Cardiac septum (tissue), 1 donor: ENCODE measurements at regions of chr10 and their contacts with region 1.

Region 1: DNA sequence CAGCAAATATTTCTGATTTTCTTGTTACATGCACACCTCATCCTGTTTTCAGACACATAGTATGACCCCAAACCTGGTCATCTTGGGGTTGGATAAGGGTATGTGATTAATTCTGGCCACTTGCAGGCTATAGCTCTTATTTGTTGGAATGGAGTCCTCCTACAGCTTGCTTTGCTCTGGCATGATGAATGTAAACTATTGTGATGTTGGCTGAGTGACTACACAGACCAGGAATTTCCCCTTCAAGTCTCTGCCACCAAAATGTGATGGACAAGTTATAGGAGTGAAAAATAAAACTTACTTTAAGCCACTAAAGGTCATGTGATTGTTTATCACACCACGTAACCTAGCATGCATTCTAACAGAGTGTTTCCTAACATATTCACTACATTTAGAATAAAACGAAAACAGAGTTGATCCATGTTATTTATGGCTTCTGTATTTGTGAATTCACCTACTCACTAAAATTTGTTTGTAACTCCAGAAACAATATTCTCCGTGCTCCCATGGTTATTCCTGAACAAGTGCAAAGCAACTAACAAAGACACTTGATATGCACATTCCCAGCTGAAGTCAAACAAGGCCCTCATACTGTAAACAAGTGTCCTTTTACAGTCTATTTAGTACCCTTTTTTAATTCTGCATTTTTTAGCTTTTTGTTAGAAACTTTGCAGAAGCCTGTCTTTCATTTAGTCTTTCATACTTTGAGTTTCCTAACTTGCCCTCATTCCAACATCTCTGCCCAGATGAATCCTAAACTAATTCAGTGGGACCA is 599.2 kb upstream of the PCDH15 start:
- DNase-seq: no peak

Region 2: DNA sequence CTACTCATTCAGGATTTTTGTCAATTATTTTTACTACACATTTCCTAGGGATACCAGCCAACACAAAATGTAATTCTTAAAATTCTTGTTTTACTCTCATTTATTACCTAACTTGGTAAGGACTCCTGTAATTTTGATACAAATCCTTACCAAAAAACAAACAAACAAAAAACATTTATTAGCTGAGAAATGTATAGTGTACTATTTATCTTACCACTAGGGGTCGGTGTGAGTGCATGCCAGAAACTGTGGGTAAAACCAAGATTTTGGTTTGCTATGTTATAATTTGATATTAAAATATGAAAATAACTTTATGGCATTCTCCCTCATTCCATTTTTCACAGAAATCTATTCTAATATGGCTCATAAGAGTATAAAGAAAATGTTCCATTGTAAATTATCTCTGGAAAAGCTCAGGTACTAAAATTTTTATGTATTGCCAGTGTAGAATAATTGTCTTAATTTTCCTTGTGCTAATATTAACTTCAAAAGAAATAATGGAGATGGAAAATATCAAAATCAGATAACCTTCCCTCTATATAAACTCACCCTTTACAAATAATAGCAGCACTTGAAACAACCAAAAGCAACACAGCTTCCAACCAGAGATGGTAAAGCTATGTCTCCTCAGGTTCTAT is 308.5 kb before region 1 on chr10:
- intact Hi-C with region 1: loop called (anchors 10 kb)
- DNase-seq: no peak

Region 3: GRCh38 chr10:55287346-55287745 is 112.9 kb before region 1 on chr10:
- intact Hi-C with region 1: loop called (anchors 10 kb)
- DNase-seq: no peak

Region 4: GRCh38 chr10:55641601-55642000 is 241.3 kb after region 1 on chr10:
- intact Hi-C with region 1: no loop called
- DNase-seq: no peak